ENCODE measurements at regions of chr22 and their contacts with region 1.

Region 1: DNA sequence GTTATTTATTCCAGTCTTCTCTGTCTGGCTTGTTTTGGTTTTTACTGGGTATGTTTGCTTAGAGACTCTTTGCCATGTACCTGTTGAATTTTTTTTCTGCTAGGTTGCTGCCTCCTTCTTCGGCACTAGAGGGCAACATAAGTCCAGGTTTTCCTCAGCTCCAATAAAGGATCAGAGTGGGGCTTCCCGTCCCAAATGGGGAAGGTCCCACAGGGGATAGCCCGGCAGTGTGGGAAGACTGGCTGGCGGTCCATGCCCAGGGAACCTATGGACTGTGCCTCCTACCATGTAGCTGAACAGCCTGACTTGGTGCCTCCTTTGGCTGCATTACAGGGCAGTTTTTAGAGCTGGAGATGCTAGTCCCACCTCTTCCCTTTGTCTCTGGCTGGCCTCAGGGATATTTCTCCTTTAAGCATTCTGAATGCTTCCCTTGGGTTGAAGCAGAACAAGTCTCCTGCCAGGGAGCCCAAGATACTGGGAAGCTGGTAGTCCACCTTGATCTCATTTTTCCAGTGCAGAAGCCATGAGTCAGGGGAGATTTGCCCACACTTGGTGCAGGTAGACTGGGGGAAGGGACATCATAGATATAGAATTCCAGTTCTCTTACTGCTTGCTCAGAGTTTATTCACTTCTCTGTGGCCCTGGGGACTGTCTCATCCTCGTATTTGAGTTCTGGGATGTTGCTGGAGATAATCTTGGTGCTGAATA is 60.2 kb downstream of the BRD1 start:
- DNase-seq: peak; percentile 84
- H3K4me3 Mint-ChIP-seq: no peak overlapping the region
- H3K27ac Mint-ChIP-seq: no peak overlapping the region
- H3K4me1 Mint-ChIP-seq: peaks cover 4% of the 10 kb centered on the region
- H3K27me3 Mint-ChIP-seq: no peaks in the 10 kb centered on the region

Region 2: GRCh38 chr22:49917974-49918910 is 150.7 kb after region 1 on chr22 and contains the starts of genes ALG12 and CRELD2:
- intact Hi-C with region 1: loop called (anchors 1 kb)
- DNase-seq: peak; percentile 99
- H3K4me3 Mint-ChIP-seq: peak within 1 kb of the TSS; percentile 81
- H3K27ac Mint-ChIP-seq: peak within 1 kb of the TSS; percentile 85
- H3K4me1 Mint-ChIP-seq: peaks cover 18% of the 10 kb centered on the region
- H3K27me3 Mint-ChIP-seq: no peaks in the 10 kb centered on the region
- total RNA-seq, gene ALG12: 13.8 and 17.9 TPM in 2 replicates
- total RNA-seq, gene CRELD2: 46.8 and 47.4 TPM in 2 replicates

Region 3: DNA sequence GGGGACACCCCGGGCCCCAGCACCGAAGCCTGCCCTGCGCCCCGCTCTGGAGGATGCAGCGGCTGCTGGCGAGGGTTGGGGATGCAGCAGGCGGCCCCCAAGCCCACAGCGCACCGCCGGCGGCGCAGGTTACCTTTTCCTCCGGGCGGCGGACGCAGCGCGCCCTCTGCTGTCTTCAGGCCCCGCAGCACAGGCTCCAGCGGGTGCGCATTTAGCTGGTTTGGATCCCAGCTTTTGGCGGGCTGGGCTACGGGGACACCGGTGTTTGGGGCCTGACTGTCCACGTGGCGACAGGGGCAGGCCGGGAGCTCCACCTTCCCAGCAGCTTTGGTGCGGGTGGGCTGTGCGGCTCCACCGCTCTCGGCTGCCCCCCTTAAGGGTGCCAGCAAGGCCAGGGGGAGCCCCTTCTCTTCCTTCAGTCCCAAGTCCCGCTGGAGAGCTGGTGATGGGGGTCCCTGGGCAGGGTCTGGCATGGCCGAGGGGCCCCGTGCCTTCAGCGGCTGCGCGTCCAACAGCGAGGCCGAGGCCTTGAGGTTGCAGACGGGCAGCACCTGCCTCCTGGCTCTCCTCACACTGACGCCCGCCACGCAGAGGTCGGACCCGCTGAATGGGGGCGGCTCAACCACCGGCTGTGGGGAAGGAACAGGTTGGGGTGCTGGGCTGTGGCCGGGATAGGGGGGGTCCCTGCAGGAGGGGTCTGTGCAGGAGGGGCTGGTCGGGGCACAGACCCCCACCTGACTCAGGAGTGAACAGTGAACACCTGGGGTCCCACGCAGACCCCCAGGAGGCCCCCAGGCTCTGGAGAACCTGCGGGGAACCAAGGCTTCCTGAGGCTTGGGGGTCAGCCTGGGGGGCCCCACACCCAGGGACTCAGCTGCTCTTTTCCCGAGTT is 263.0 kb after region 1 on chr22:
- intact Hi-C with region 1: loop called (anchors 2 kb)
- DNase-seq: peak; percentile 95
- H3K4me3 Mint-ChIP-seq: no peak overlapping the region
- H3K27ac Mint-ChIP-seq: no peak overlapping the region
- H3K4me1 Mint-ChIP-seq: peaks cover 11% of the 10 kb centered on the region
- H3K27me3 Mint-ChIP-seq: peaks cover 6% of the 10 kb centered on the region

Region 4: GRCh38 chr22:50209893-50210292 is 442.4 kb after region 1 on chr22:
- intact Hi-C with region 1: loop called (anchors 5 kb)
- DNase-seq: peak; percentile 91
- H3K4me3 Mint-ChIP-seq: no peak overlapping the region
- H3K27ac Mint-ChIP-seq: no peak overlapping the region
- H3K4me1 Mint-ChIP-seq: peaks cover 10% of the 10 kb centered on the region
- H3K27me3 Mint-ChIP-seq: no peaks in the 10 kb centered on the region